ENCODE measurements at regions of chrX and their contacts with region 1.

Region 1: DNA sequence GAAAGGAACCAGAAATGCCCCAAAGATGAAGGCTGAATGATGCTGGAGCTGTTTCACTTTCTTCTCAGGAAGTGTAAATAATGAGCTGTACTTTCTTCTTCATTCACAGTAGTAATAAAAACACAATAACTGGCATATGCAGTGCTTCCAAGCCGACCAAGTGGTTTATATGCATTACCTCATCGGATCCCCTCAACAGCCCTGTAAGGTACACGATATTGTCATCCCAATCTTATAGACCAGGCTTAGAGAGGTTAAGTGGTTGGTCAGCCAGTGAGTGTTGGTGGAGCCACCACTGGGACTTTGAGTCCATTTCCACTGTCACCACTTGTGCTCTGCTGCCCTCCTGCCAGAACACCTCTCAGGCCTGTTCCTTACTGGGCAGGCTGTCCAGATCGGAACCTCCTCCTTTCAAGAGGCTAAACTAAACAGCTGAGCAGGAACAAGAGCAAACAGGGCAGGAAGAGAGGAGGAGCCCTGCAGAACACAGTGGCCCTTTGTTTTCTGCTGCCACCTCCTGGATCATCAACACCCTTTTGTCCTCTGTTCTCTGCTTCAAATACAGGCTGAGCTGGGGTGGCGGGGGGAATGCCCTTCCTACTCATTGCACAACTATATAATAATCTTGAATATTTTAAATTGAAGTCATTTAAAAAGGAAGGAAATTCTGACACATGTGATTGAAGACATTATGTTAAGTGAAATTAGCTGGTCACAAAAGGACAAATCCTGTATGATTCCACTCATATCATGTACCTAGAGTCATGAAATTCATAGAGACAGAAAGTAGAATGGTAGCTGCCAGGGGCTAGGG is 112.5 kb upstream of the ATP6AP2 start:
- DNase-seq: peak; percentile 41
- ATAC-seq: no peak
- H3K4me3 ChIP-seq: no peak overlapping the region
- H3K4me3 Mint-ChIP-seq: no peak overlapping the region
- H3K27ac ChIP-seq: no peak overlapping the region
- H3K27ac Mint-ChIP-seq: no peak overlapping the region
- H3K4me1 ChIP-seq: peaks cover 8 to 14% of the 10 kb centered on the region in 2 donors
- H3K4me1 Mint-ChIP-seq: peaks cover 24% of the 10 kb centered on the region
- H3K27me3 ChIP-seq: peaks cover 0 to 2% (median 0%) of the 10 kb centered on the region in 4 experiments
- H3K27me3 Mint-ChIP-seq: peaks cover 17% of the 10 kb centered on the region
- CTCF ChIP-seq: peak; percentile 24

Region 2: DNA sequence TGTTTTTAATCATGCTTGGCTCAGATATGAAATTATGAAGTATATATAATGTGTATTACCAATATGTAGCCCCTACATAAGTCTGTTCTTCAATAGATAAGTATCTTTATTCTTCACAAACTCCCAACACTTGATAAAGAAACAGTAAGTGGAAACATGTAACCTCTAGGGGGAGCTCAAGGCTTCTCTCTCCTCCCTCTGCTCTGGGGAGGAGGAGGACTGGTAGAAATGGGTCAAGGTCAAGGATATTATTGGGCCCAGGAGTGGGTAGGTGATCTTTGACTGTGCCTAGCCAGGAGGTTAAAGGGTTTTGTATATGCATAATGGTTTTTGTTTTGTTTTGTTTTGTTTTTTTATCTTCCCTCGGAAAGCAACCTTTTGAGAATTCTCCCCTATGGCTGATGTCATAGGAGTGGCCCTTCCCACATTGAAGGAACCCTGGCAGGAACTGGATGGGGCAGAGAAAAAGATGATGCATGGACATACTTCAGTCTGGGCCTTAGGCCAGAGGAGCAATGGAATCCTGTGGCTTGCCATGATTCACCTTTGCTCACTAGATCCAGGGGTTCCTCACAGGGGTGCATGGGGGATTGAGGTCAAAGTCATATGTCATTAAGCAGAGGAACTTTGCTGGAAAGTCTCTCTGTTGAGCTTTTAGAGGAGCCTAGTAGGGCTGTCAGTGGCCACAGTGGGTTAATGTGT is 1206.6 kb before region 1 on chrX:
- CTCF ChIA-PET with region 1: no interaction called
- POLR2A ChIA-PET with region 1: no interaction called
- intact Hi-C with region 1: loop called (anchors 5 kb)
- DNase-seq: peak; percentile 53
- ATAC-seq: no peak
- H3K4me3 ChIP-seq: no peak overlapping the region
- H3K4me3 Mint-ChIP-seq: no peak overlapping the region
- H3K27ac ChIP-seq: no peak overlapping the region
- H3K27ac Mint-ChIP-seq: no peak overlapping the region
- H3K4me1 ChIP-seq: peaks cover 0 to 3% of the 10 kb centered on the region in 2 donors
- H3K4me1 Mint-ChIP-seq: peaks cover 9% of the 10 kb centered on the region
- H3K27me3 ChIP-seq: no peaks in the 10 kb centered on the region
- H3K27me3 Mint-ChIP-seq: no peaks in the 10 kb centered on the region
- CTCF ChIP-seq: peak; percentile 61

Region 3: DNA sequence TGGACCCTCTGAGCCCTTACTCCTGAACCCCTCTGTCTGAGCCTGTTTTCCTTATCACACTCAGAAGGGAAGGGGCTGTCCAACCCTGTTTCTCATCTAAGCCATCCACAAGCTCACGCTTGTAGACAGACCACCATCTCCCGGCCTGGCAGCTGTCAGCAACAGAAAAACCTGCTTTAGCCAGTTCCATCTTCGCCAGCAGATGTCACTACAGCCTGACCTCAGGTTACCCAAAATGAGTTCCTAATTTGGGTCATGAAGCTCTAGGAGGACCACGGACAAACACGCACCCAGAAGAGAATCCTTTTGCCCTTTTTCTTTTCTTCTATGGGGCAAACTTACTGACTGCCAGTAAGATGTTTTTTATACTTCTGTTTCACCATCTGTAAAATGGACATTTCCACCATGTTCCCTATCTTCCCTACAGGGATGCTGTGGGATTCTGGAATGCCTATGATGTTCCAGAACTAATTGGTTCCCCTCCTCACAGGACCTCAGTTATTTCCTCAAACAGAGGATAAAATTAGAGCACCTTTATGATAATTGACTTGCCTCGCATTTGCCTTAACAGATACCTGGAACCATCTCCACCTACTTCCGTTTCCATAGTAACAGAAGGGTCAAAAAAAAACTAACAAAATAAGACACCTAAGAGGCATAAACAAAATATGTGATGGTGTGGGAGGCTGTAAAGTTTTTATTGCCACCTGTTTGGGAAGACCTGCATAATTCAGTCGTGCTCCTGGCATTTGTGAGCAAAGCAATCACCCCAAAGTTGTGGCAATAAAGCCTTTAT is 815.7 kb before region 1 on chrX:
- CTCF ChIA-PET with region 1: interaction called, 4 read pairs
- POLR2A ChIA-PET with region 1: no interaction called
- intact Hi-C with region 1: loop called (anchors 1 kb)
- DNase-seq: peak; percentile 16
- ATAC-seq: no peak
- H3K4me3 ChIP-seq: no peak overlapping the region
- H3K4me3 Mint-ChIP-seq: no peak overlapping the region
- H3K27ac ChIP-seq: no peak overlapping the region
- H3K27ac Mint-ChIP-seq: no peak overlapping the region
- H3K4me1 ChIP-seq: no peaks in the 10 kb centered on the region
- H3K4me1 Mint-ChIP-seq: no peaks in the 10 kb centered on the region
- H3K27me3 ChIP-seq: peaks cover 0 to 3% (median 0%) of the 10 kb centered on the region in 4 experiments
- H3K27me3 Mint-ChIP-seq: peaks cover 18% of the 10 kb centered on the region
- CTCF ChIP-seq: peak; percentile 26

Region 4: DNA sequence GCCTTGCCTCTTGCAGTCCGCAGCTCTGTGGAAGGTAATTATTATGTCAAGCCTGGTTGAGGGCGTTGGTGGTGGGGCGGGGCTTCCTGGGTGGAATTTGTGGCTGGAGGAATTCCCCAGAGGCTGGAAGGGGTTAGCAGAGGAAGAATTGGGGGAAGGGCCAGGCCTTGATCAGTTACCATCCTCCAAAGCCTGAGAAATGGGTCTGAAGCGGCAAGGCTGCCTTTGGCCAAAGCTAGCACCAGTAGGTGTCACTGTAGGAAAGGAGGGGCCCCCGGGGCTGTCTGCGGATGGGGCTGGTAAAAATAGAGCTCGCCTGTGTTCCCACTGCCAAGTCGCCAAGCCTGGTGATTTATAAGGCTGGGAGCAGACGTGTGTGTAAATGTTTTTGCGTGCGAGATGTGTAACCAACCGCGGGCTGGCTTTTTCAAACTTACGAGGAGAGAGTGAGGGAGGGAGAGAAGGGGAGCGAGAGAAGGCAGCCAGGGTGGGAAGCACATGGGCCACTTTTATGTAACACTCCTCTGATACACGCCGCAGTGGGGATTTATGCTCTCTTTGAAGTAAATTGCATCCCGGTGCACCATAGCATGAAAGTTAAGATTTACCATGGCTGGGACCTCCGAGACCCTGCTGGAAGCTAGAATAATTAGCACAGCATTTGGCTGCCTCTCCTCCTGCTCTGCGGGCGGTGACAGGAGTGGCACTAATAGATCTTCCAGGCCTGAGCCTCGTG is 737.4 kb before region 1 on chrX:
- CTCF ChIA-PET with region 1: interaction called, 13 read pairs
- POLR2A ChIA-PET with region 1: no interaction called
- intact Hi-C with region 1: no loop called
- DNase-seq: peak; percentile 57
- ATAC-seq: peak; percentile 60
- H3K4me3 ChIP-seq: no peak overlapping the region
- H3K4me3 Mint-ChIP-seq: peak overlapping the region; percentile 35
- H3K27ac ChIP-seq: no peak overlapping the region
- H3K27ac Mint-ChIP-seq: no peak overlapping the region
- H3K4me1 ChIP-seq: peaks cover 6 to 8% of the 10 kb centered on the region in 2 donors
- H3K4me1 Mint-ChIP-seq: peaks cover 4% of the 10 kb centered on the region
- H3K27me3 ChIP-seq: peaks cover 0 to 12% (median 2%) of the 10 kb centered on the region in 4 experiments
- H3K27me3 Mint-ChIP-seq: peaks cover 5% of the 10 kb centered on the region
- CTCF ChIP-seq: peak; percentile 43

Region 5: GRCh38 chrX:39814391-39814790 is 653.8 kb before region 1 on chrX:
- CTCF ChIA-PET with region 1: interaction called, 5 read pairs
- POLR2A ChIA-PET with region 1: no interaction called
- intact Hi-C with region 1: loop called (anchors 10 kb)
- DNase-seq: peak; percentile 43
- ATAC-seq: no peak
- H3K4me3 ChIP-seq: no peak overlapping the region
- H3K4me3 Mint-ChIP-seq: no peak overlapping the region
- H3K27ac ChIP-seq: no peak overlapping the region
- H3K27ac Mint-ChIP-seq: no peak overlapping the region
- H3K4me1 ChIP-seq: no peaks in the 10 kb centered on the region
- H3K4me1 Mint-ChIP-seq: peaks cover 10% of the 10 kb centered on the region
- H3K27me3 ChIP-seq: peaks cover 0 to 20% (median 1%) of the 10 kb centered on the region in 4 experiments
- H3K27me3 Mint-ChIP-seq: peaks cover 31% of the 10 kb centered on the region
- CTCF ChIP-seq: peak; percentile 32

Region 6: GRCh38 chrX:40184968-40185367 is 283.3 kb before region 1 on chrX:
- CTCF ChIA-PET with region 1: no interaction called
- POLR2A ChIA-PET with region 1: no interaction called
- intact Hi-C with region 1: no loop called
- DNase-seq: no peak
- ATAC-seq: no peak
- H3K4me3 ChIP-seq: no peak overlapping the region
- H3K4me3 Mint-ChIP-seq: no peak overlapping the region
- H3K27ac ChIP-seq: no peak overlapping the region
- H3K27ac Mint-ChIP-seq: no peak overlapping the region
- H3K4me1 ChIP-seq: no peaks in the 10 kb centered on the region
- H3K4me1 Mint-ChIP-seq: peaks cover 8% of the 10 kb centered on the region
- H3K27me3 ChIP-seq: no peaks in the 10 kb centered on the region
- H3K27me3 Mint-ChIP-seq: no peaks in the 10 kb centered on the region
- CTCF ChIP-seq: no peak

Region 7: DNA sequence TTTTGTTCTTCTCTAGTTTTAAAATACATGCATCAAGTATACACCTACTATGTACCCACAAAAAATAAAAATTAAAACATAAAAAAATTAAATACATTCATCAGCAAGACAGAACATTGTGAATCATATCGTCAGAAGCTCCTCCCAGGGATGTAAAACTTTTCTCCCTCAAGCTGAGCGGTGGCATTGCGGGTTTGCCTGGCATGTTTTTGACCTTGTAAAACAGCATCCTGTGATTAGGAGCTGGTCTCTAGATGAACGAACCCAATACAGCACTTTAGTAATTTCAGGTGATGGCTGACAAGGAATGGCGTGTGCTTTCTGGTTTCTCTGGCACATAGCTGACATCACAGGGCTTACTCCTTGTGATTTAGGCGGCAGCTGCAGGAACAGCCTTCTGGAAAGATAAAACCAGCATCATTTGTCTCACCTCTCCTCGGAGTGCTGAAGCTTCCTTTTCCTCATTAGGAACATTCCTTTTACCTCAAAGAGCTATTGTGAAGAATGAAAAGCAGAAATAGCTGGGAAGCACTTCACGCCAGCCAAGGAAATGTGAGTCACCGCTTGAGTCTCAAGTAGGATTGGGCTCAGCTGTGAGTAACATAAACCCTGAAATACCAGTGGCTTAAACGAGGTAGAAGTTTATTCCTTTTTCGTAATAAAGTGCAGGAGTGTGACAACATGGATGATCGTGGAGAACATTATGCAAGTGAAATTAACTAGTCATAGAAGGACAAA is 1023.2 kb after region 1 on chrX:
- CTCF ChIA-PET with region 1: no interaction called
- POLR2A ChIA-PET with region 1: no interaction called
- intact Hi-C with region 1: no loop called
- DNase-seq: no peak
- ATAC-seq: no peak
- H3K4me3 ChIP-seq: no peak overlapping the region
- H3K4me3 Mint-ChIP-seq: no peak overlapping the region
- H3K27ac ChIP-seq: no peak overlapping the region
- H3K27ac Mint-ChIP-seq: no peak overlapping the region
- H3K4me1 ChIP-seq: no peaks in the 10 kb centered on the region
- H3K4me1 Mint-ChIP-seq: peaks cover 6% of the 10 kb centered on the region
- H3K27me3 ChIP-seq: no peaks in the 10 kb centered on the region
- H3K27me3 Mint-ChIP-seq: no peaks in the 10 kb centered on the region
- CTCF ChIP-seq: no peak